CD8-positive, alpha-beta T cell (primary cell): ENCODE measurements at regions of chr6 and their contacts with region 1.

Region 1: DNA sequence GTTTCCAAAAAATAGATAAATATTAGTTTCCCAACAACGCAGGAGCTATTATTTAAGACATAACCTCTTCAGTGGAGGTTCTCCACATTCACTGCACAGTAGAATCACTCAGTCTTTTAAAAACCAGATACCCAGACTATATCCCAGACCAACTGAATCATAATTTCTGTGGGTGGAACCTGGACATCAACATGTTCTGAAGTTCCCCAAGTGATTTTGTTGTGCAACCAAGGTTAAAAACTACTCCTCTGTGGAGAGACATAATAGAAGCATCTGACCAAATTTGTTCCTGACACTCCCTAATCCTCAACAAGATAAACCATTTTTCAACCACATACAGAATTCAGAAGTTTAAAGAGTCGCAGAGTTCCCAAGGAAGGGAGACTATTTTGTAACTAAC is 42.3 kb downstream of the STK38 start:
- DNase-seq: no peak
- ATAC-seq: no peak
- H3K4me3 ChIP-seq: no peak overlapping the region
- H3K4me3 Mint-ChIP-seq: no peak overlapping the region
- H3K27ac ChIP-seq: no peak overlapping the region
- H3K27ac Mint-ChIP-seq: peak overlapping the region; percentile 50
- H3K4me1 ChIP-seq: peaks cover 23% of the 10 kb centered on the region
- H3K4me1 Mint-ChIP-seq: peaks cover 38% of the 10 kb centered on the region
- H3K27me3 ChIP-seq: no peaks in the 10 kb centered on the region
- H3K27me3 Mint-ChIP-seq: no peaks in the 10 kb centered on the region
- CTCF ChIP-seq: no peak

Region 2: DNA sequence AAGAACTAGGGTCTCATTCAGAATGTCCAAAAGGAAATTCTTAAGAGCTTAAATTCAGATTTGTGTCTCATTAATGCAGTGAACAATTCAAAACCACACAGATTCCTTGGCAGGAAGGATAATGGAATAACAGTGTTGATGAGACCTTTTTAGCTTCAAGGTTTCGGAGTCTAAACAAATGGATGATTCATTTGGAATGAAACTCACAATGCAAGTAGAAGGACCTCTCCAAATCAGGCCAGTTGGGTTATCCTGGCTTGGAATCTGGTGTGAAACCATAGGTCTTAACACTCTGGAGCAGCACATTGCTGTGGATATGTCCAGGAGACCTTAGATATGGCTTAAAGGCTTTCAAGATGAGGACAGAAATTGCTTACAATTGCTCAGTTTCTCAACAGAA is 17.3 kb before region 1 on chr6:
- CTCF ChIA-PET with region 1: interaction called, 3 read pairs
- POLR2A ChIA-PET with region 1: interaction called, 3 read pairs
- intact Hi-C with region 1: loop called in 1 of 2 experiments (anchors 2 kb)
- DNase-seq: no peak
- ATAC-seq: no peak
- H3K4me3 ChIP-seq: no peak overlapping the region
- H3K4me3 Mint-ChIP-seq: no peak overlapping the region
- H3K27ac ChIP-seq: no peak overlapping the region
- H3K27ac Mint-ChIP-seq: peak overlapping the region; percentile 45
- H3K4me1 ChIP-seq: no peaks in the 10 kb centered on the region
- H3K4me1 Mint-ChIP-seq: peaks cover 11% of the 10 kb centered on the region
- H3K27me3 ChIP-seq: no peaks in the 10 kb centered on the region
- H3K27me3 Mint-ChIP-seq: no peaks in the 10 kb centered on the region
- CTCF ChIP-seq: no peak

Region 3: GRCh38 chr6:36546920-36547645 is 42.1 kb after region 1 on chr6 and contains the start of gene STK38:
- CTCF ChIA-PET with region 1: no interaction called
- POLR2A ChIA-PET with region 1: interaction called, 4 read pairs
- intact Hi-C with region 1: loop called in 1 of 2 experiments (anchors 5 kb)
- DNase-seq: peak; percentile 85 to 98 (median 94)
- ATAC-seq: peak; percentile 72
- H3K4me3 ChIP-seq: peak within 1 kb of the TSS; percentile 82 to 85
- H3K4me3 Mint-ChIP-seq: peak within 1 kb of the TSS; percentile 99
- H3K27ac ChIP-seq: peak within 1 kb of the TSS; percentile 92 to 94
- H3K27ac Mint-ChIP-seq: peak within 1 kb of the TSS; percentile 99
- H3K4me1 ChIP-seq: peaks cover 32% of the 10 kb centered on the region
- H3K4me1 Mint-ChIP-seq: peaks cover 52% of the 10 kb centered on the region
- H3K27me3 ChIP-seq: no peaks in the 10 kb centered on the region
- H3K27me3 Mint-ChIP-seq: no peaks in the 10 kb centered on the region
- CTCF ChIP-seq: no peak
- total RNA-seq, gene STK38: 37.6 to 38.7 TPM